Caco-2 (cell line): ENCODE measurements at regions of chr12 and their contacts with region 1.

Region 1: GRCh38 chr12:6688999-6689882 is at the start of gene ZNF384:
- DNase-seq: peak; percentile 98 to 100
- H3K4me3 ChIP-seq: peak within 1 kb of the TSS; percentile 96
- H3K4me3 Mint-ChIP-seq: peak within 1 kb of the TSS; percentile 96
- H3K27ac Mint-ChIP-seq: peak within 1 kb of the TSS; percentile 95
- H3K4me1 ChIP-seq: peaks cover 7% of the 10 kb centered on the region; the same call in 1 of the 2 replicates
- H3K4me1 Mint-ChIP-seq: peaks cover 23% of the 10 kb centered on the region
- H3K27me3 ChIP-seq: no peaks in the 10 kb centered on the region
- H3K27me3 Mint-ChIP-seq: peaks cover 9% of the 10 kb centered on the region
- CTCF ChIP-seq: peak in 1 of 2 experiments; percentile 30
- total RNA-seq, gene ZNF384: 119 and 127 TPM in 2 replicates

Region 2: GRCh38 chr12:5988659-5989116 is 700.6 kb before region 1 on chr12:
- CTCF ChIA-PET with region 1: no interaction called
- POLR2A ChIA-PET with region 1: interaction called, 14 read pairs
- intact Hi-C with region 1: no loop called
- DNase-seq: peak; percentile 82 to 92
- H3K4me3 ChIP-seq: no peak overlapping the region
- H3K4me3 Mint-ChIP-seq: no peak overlapping the region
- H3K27ac Mint-ChIP-seq: no peak overlapping the region
- H3K4me1 ChIP-seq: no peaks in the 10 kb centered on the region
- H3K4me1 Mint-ChIP-seq: peaks cover 6% of the 10 kb centered on the region
- H3K27me3 ChIP-seq: no peaks in the 10 kb centered on the region
- H3K27me3 Mint-ChIP-seq: no peaks in the 10 kb centered on the region
- CTCF ChIP-seq: peak; percentile 98 to 99

Region 3: GRCh38 chr12:6540181-6540877 is 148.9 kb before region 1 on chr12:
- CTCF ChIA-PET with region 1: interaction called, 17 read pairs
- POLR2A ChIA-PET with region 1: interaction called, 7 read pairs
- intact Hi-C with region 1: no loop called
- DNase-seq: peak; percentile 66 to 81
- H3K4me3 ChIP-seq: no peak overlapping the region
- H3K4me3 Mint-ChIP-seq: peak overlapping the region; percentile 71
- H3K27ac Mint-ChIP-seq: peak overlapping the region; percentile 97
- H3K4me1 ChIP-seq: peaks cover 31% of the 10 kb centered on the region
- H3K4me1 Mint-ChIP-seq: peaks cover 42% of the 10 kb centered on the region
- H3K27me3 ChIP-seq: no peaks in the 10 kb centered on the region
- H3K27me3 Mint-ChIP-seq: no peaks in the 10 kb centered on the region
- CTCF ChIP-seq: no peak

Region 4: DNA sequence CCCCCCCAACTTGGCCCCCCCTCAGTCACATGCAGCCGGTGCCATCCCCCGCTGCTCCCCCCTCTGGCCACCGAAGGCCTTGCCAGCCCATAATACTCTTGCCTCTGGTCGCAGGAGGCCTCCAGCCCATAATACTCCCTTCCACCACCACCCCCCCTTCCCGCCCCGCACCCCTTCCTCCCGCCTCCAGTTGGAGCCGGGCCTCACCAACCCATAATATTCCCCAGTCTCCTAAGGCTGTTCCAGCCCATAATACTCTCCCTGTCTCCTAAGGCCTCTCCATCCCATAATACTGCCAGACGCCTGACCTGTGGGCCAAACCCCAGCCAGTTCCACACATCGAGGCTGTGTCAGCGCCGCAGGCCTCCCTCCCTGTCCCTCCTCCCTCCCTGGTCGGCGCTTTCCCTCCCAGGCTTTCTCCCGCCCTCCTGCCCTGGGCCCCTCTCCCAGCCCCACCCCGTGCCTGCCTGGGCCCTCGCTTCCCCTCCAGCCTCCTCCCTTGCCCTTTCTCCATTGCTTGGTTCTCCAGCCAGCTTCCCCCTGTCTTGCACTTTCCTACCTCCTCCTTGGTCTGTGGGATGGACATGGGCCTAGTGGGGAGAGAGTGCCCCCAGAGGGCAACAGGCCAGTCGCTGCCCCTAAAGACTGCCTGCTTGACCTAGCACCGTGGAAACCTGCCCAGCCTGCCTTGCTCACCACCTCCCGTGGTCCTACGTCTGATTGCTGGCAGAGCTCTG is 75.3 kb before region 1 on chr12:
- CTCF ChIA-PET with region 1: interaction called, 3 read pairs
- POLR2A ChIA-PET with region 1: no interaction called
- intact Hi-C with region 1: loop called (anchors 2 kb)
- DNase-seq: peak; percentile 80 to 92
- H3K4me3 ChIP-seq: no peak overlapping the region
- H3K4me3 Mint-ChIP-seq: no peak overlapping the region
- H3K27ac Mint-ChIP-seq: peak overlapping the region; percentile 20
- H3K4me1 ChIP-seq: peaks cover 23% of the 10 kb centered on the region
- H3K4me1 Mint-ChIP-seq: peaks cover 7% of the 10 kb centered on the region
- H3K27me3 ChIP-seq: no peaks in the 10 kb centered on the region
- H3K27me3 Mint-ChIP-seq: no peaks in the 10 kb centered on the region
- CTCF ChIP-seq: peak in 1 of 2 experiments; percentile 21

Region 5: GRCh38 chr12:6735448-6736191 is 46.4 kb after region 1 on chr12:
- CTCF ChIA-PET with region 1: interaction called, 3 read pairs
- POLR2A ChIA-PET with region 1: interaction called, 11 read pairs
- intact Hi-C with region 1: no loop called
- DNase-seq: peak; percentile 70 to 81
- H3K4me3 ChIP-seq: no peak overlapping the region
- H3K4me3 Mint-ChIP-seq: no peak overlapping the region
- H3K27ac Mint-ChIP-seq: peak overlapping the region; percentile 24
- H3K4me1 ChIP-seq: no peaks in the 10 kb centered on the region
- H3K4me1 Mint-ChIP-seq: peaks cover 8% of the 10 kb centered on the region
- H3K27me3 ChIP-seq: no peaks in the 10 kb centered on the region
- H3K27me3 Mint-ChIP-seq: no peaks in the 10 kb centered on the region
- CTCF ChIP-seq: peak; percentile 94

Region 6: GRCh38 chr12:6851921-6852650 is 162.8 kb after region 1 on chr12 and contains the start of gene USP5:
- CTCF ChIA-PET with region 1: interaction called, 6 read pairs
- POLR2A ChIA-PET with region 1: interaction called, 37 read pairs
- intact Hi-C with region 1: loop called (anchors 1 kb)
- DNase-seq: peak; percentile 100
- H3K4me3 ChIP-seq: peak within 1 kb of the TSS; percentile 69
- H3K4me3 Mint-ChIP-seq: peak within 1 kb of the TSS; percentile 94
- H3K27ac Mint-ChIP-seq: peak within 1 kb of the TSS; percentile 95
- H3K4me1 ChIP-seq: peaks cover 13% of the 10 kb centered on the region
- H3K4me1 Mint-ChIP-seq: peaks cover 19% of the 10 kb centered on the region
- H3K27me3 ChIP-seq: no peaks in the 10 kb centered on the region
- H3K27me3 Mint-ChIP-seq: no peaks in the 10 kb centered on the region
- CTCF ChIP-seq: no peak
- total RNA-seq, gene USP5: 226 and 230 TPM in 2 replicates